WTC11 (cell line): ENCODE measurements at regions of chr12 and their contacts with region 1.

Region 1: GRCh38 chr12:93003531-93004239 is 74.6 kb upstream of the EEA1 start:
- DNase-seq: no peak
- ATAC-seq: no peak; the same call in 1 of the 2 replicates
- H3K4me3 Mint-ChIP-seq: no peak overlapping the region
- H3K27ac Mint-ChIP-seq: no peak overlapping the region
- H3K4me1 Mint-ChIP-seq: peaks cover 27% of the 10 kb centered on the region
- H3K27me3 Mint-ChIP-seq: no peaks in the 10 kb centered on the region
- CTCF ChIP-seq: no peak

Region 2: DNA sequence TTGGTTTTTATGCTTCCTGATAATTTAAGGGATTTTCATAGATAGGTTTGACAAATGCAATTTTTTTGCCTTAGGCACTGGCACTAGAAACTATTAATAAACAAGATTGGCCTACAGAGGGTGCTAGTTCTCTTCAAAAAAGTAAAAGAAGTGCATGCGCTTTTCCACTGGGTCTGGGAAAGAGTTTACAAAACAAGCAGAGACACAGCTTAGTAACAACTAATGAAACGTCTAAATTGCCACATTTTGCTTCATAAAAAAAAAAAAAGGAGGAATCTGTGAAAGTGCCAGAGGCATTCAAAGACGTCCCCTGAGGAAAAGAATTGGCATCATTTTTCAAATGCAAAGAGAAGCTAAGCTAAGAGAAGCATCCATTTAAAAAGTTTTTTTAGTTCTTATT is 16.3 kb before region 1 on chr12:
- CTCF ChIA-PET with region 1: interaction called, 11 read pairs
- POLR2A ChIA-PET with region 1: no interaction called
- DNase-seq: no peak
- ATAC-seq: peak; percentile 65
- H3K4me3 Mint-ChIP-seq: no peak overlapping the region
- H3K27ac Mint-ChIP-seq: peak overlapping the region; percentile 33; the same call in 1 of the 2 replicates
- H3K4me1 Mint-ChIP-seq: peaks cover 8% of the 10 kb centered on the region
- H3K27me3 Mint-ChIP-seq: no peaks in the 10 kb centered on the region
- CTCF ChIP-seq: peak; percentile 38; the same call in 1 of the 2 replicates

Region 3: GRCh38 chr12:93127582-93128331 is 124.1 kb after region 1 on chr12:
- CTCF ChIA-PET with region 1: no interaction called
- POLR2A ChIA-PET with region 1: no interaction called
- DNase-seq: peak; percentile 22
- ATAC-seq: peak; percentile 81
- H3K4me3 Mint-ChIP-seq: no peak overlapping the region
- H3K27ac Mint-ChIP-seq: no peak overlapping the region
- H3K4me1 Mint-ChIP-seq: peaks cover 5% of the 10 kb centered on the region
- H3K27me3 Mint-ChIP-seq: no peaks in the 10 kb centered on the region
- CTCF ChIP-seq: no peak; the same call in 1 of the 2 replicates